BJ (cell line): ENCODE measurements at regions of chr18 and their contacts with region 1.

Region 1: GRCh38 chr18:26307189-26307773 is 81.0 kb downstream of the TAF4B start:
- DNase-seq: no peak
- H3K4me3 ChIP-seq: no peak overlapping the region
- H3K27me3 ChIP-seq: no peaks in the 10 kb centered on the region
- CTCF ChIP-seq: peak; percentile 71

Region 2: GRCh38 chr18:26268454-26268853 is 38.8 kb before region 1 on chr18:
- CTCF ChIA-PET with region 1: no interaction called
- POLR2A ChIA-PET with region 1: no interaction called
- DNase-seq: no peak
- H3K4me3 ChIP-seq: no peak overlapping the region
- H3K27me3 ChIP-seq: no peaks in the 10 kb centered on the region
- CTCF ChIP-seq: no peak

Region 3: DNA sequence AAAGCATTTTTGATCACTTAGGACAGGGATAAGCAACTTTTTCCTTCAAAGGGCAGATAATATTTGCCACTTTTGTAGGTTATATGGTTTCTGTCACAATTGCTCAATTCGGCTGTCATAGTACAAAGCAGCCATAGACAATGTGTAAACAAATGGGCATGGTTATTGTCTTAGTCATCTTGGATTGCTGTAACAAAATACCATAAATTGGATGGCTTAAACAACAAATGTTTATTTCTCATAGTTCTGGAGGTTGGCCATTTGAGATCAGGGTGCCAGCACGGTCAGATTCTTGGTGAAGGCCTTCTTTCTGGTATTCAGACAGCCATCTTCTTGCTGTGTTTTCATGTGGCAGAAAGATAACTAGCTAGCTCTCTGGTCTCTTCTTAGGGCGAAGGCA is 10.1 kb after region 1 on chr18:
- CTCF ChIA-PET with region 1: interaction called, 10 read pairs
- POLR2A ChIA-PET with region 1: no interaction called
- DNase-seq: no peak
- H3K4me3 ChIP-seq: no peak overlapping the region
- H3K27me3 ChIP-seq: no peaks in the 10 kb centered on the region
- CTCF ChIP-seq: no peak